ENCODE measurements at regions of chrX and their contacts with region 1.

Region 1: GRCh38 chrX:9301836-9302235 is 163.0 kb upstream of the TBL1X start:
- DNase-seq: no peak
- H3K4me3 ChIP-seq: no peak overlapping the region
- H3K4me3 Mint-ChIP-seq: no peak overlapping the region
- H3K27ac ChIP-seq: no peak overlapping the region
- H3K27ac Mint-ChIP-seq: no peak overlapping the region
- H3K4me1 ChIP-seq: no peaks in the 10 kb centered on the region
- H3K4me1 Mint-ChIP-seq: no peaks in the 10 kb centered on the region
- H3K27me3 ChIP-seq: no peaks in the 10 kb centered on the region
- H3K27me3 Mint-ChIP-seq: no peaks in the 10 kb centered on the region

Region 2: DNA sequence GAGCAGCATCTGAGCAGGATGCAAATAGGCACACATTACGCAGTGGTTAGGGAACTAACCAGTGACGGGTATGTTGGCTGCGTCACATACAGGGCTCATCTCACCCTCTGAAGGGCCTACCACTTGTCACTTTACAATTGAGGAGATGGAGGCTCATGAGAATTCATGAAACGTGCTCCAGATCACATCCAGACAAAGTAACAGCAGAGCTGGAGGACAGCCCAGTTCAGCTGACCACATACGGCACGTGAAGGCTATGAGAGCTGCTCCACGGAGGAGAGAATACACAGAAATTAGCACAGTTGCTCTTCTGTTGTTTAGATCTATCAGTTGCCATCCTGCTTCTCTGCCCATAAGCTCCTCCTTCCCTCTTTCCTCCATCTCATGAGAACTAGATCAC is 346.3 kb before region 1 on chrX:
- CTCF ChIA-PET with region 1: no interaction called
- POLR2A ChIA-PET with region 1: no interaction called
- intact Hi-C with region 1: no loop called
- DNase-seq: no peak
- H3K4me3 ChIP-seq: no peak overlapping the region
- H3K4me3 Mint-ChIP-seq: peak overlapping the region in 1 of 8 donors; percentile 60
- H3K27ac ChIP-seq: no peak overlapping the region
- H3K27ac Mint-ChIP-seq: no peak overlapping the region
- H3K4me1 ChIP-seq: no peaks in the 10 kb centered on the region
- H3K4me1 Mint-ChIP-seq: no peaks in the 10 kb centered on the region
- H3K27me3 ChIP-seq: no peaks in the 10 kb centered on the region
- H3K27me3 Mint-ChIP-seq: peaks cover 8% of the 10 kb centered on the region in 2 donors

Region 3: GRCh38 chrX:9267415-9267814 is 34.4 kb before region 1 on chrX:
- CTCF ChIA-PET with region 1: no interaction called
- POLR2A ChIA-PET with region 1: no interaction called
- intact Hi-C with region 1: no loop called
- DNase-seq: no peak
- H3K4me3 ChIP-seq: no peak overlapping the region
- H3K4me3 Mint-ChIP-seq: no peak overlapping the region
- H3K27ac ChIP-seq: no peak overlapping the region
- H3K27ac Mint-ChIP-seq: no peak overlapping the region
- H3K4me1 ChIP-seq: no peaks in the 10 kb centered on the region
- H3K4me1 Mint-ChIP-seq: no peaks in the 10 kb centered on the region
- H3K27me3 ChIP-seq: no peaks in the 10 kb centered on the region
- H3K27me3 Mint-ChIP-seq: no peaks in the 10 kb centered on the region

Region 4: DNA sequence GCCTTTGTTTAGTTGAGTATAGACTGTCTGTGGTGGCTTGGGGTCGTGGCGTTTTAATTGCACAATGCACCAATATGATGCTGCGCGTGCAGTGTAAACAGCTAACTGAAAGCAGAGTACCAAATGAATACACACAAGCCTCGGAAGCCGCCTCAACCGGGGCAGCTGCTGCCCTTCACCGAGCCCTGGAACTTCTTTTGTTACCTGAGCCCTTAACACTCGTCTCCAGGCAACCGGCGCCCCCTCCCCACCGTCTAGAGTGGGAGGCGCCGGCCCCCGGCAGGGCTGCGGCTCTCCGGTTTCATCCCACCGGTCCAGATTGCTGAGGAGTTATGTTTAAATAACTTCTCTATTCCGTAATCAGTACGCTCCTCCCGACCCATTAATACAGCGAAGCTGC is 10.2 kb before region 1 on chrX:
- CTCF ChIA-PET with region 1: no interaction called
- POLR2A ChIA-PET with region 1: no interaction called
- intact Hi-C with region 1: no loop called
- DNase-seq: no peak
- H3K4me3 ChIP-seq: no peak overlapping the region
- H3K4me3 Mint-ChIP-seq: peak overlapping the region in 1 of 8 donors; percentile 15
- H3K27ac ChIP-seq: no peak overlapping the region
- H3K27ac Mint-ChIP-seq: no peak overlapping the region
- H3K4me1 ChIP-seq: no peaks in the 10 kb centered on the region
- H3K4me1 Mint-ChIP-seq: peaks cover 0 to 7% (median 2%) of the 10 kb centered on the region in 4 donors
- H3K27me3 ChIP-seq: no peaks in the 10 kb centered on the region
- H3K27me3 Mint-ChIP-seq: no peaks in the 10 kb centered on the region

Region 5: DNA sequence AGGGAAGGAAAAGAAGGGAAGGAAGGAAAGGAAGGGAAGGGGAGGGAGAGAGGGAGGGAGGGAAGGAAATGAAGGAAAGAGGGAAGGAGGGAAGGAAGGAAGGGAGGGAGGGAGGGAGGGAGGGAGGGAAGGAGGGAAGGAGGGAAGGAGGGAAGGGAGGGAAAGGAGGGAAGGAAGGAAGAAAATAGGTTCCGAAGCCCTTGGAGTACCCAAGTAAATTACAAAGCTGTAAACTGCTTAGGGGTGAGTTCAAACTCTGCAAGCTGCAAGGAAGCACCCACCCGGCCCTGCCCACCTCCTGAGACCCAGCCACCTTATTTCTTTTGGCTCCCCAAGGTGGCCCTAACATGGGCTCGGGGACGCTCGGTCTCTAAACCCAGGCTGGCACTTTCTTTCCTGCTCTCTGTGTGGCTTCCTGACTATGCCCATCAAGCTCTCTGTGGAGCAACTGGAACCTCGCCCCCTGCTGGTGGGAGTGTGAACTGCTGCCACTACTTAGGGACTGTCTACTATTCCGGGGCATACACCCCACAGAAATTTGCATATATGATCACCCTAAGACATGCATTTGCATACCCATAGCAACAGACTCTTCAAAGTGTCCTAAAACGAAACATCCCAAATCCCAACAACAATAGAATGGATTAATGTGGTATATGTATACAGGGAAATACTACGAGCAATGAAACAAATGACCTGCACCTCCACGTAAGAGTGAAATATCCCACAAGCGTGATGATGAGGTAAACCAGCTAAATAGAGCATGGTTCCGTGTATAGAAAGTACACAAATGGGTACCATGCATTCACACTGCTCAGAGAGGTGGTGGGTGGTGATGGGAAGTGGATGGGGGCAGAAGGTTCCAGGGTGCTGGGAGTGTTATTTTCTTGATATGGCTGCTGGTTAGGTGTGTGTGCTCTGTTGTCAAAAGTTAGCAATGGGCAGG is 11.4 kb after region 1 on chrX:
- CTCF ChIA-PET with region 1: interaction called, 11 read pairs
- POLR2A ChIA-PET with region 1: no interaction called
- intact Hi-C with region 1: no loop called
- DNase-seq: peak; percentile 60 to 72 (median 67)
- H3K4me3 ChIP-seq: no peak overlapping the region
- H3K4me3 Mint-ChIP-seq: peak overlapping the region in 4 of 8 donors; percentile 62 to 77 (median 66)
- H3K27ac ChIP-seq: no peak overlapping the region
- H3K27ac Mint-ChIP-seq: peak overlapping the region in 3 of 7 donors; percentile 9 to 53 (median 23)
- H3K4me1 ChIP-seq: no peaks in the 10 kb centered on the region
- H3K4me1 Mint-ChIP-seq: peaks cover 11 to 16% (median 12%) of the 10 kb centered on the region in 4 donors
- H3K27me3 ChIP-seq: no peaks in the 10 kb centered on the region
- H3K27me3 Mint-ChIP-seq: no peaks in the 10 kb centered on the region

Region 6: GRCh38 chrX:9515973-9516538 is 214.2 kb after region 1 on chrX:
- CTCF ChIA-PET with region 1: no interaction called
- POLR2A ChIA-PET with region 1: no interaction called
- intact Hi-C with region 1: no loop called
- DNase-seq: no peak
- H3K4me3 ChIP-seq: no peak overlapping the region
- H3K4me3 Mint-ChIP-seq: peak overlapping the region in 1 of 8 donors; percentile 47
- H3K27ac ChIP-seq: no peak overlapping the region
- H3K27ac Mint-ChIP-seq: peak overlapping the region in 1 of 7 donors; percentile 57
- H3K4me1 ChIP-seq: peaks cover 19% of the 10 kb centered on the region
- H3K4me1 Mint-ChIP-seq: peaks cover 19 to 45% (median 30%) of the 10 kb centered on the region in 4 donors
- H3K27me3 ChIP-seq: no peaks in the 10 kb centered on the region
- H3K27me3 Mint-ChIP-seq: no peaks in the 10 kb centered on the region